ENCODE measurements at regions of chr15 and their contacts with region 1.

Region 1: GRCh38 chr15:89874926-89875564 is 18.7 kb downstream of the AP3S2 start:
- DNase-seq: peak; percentile 59
- H3K4me3 ChIP-seq: no peak overlapping the region
- H3K27ac ChIP-seq: no peak overlapping the region
- H3K27me3 ChIP-seq: no peaks in the 10 kb centered on the region
- CTCF ChIP-seq: peak; percentile 99

Region 2: DNA sequence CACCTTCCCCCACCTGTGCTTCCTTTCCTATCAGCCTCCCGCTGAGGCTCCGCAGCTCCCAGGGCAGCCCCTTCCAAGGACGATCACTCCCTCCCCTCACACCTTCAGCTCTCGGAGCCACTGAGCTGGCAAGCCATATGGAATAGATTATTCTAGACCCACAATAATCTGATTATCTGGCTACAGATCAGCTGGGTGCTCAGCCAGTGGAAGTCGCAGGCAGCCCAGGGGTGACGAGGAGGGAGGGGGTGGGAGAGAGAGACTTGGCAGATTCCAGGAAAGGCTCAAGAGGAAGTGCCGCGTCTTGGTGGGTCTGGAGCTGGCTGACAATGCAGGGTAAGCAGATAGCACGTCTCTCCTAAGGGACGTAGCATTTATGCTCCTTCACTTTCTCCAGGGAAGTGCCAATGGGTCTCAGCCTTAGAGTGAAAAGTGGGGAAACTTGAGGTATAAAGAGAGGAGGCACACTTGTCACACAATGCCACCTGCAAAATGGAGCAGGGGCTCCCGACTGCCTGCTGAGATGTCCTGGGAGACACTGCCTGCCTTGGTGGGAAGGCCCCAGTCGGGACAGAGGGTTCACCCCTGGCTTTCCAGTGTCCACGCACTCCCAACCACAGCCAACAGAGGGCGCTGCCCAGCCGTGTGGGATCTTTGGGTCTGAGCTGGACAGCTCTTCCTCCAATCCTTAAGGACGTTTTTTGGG is 114.6 kb before region 1 on chr15:
- in situ Hi-C with region 1: loop called (anchors 5 kb)
- DNase-seq: peak; percentile 51
- H3K4me3 ChIP-seq: no peak overlapping the region
- H3K27ac ChIP-seq: no peak overlapping the region
- H3K27me3 ChIP-seq: no peaks in the 10 kb centered on the region
- CTCF ChIP-seq: peak; percentile 99